Breast epithelium (tissue), 4 donors: ENCODE measurements at regions of chr6 and their contacts with region 1.

Region 1: GRCh38 chr6:42043787-42044475 is 6.4 kb upstream of the TAF8 start:
- DNase-seq: peak; percentile 80 to 89
- H3K4me3 ChIP-seq: peak overlapping the region in 2 of 3 donors; percentile 52 to 90
- H3K27ac ChIP-seq: peak overlapping the region; percentile 67 to 82
- H3K4me1 ChIP-seq: peaks cover 6 to 27% of the 10 kb centered on the region in 2 donors
- H3K27me3 ChIP-seq: no peaks in the 10 kb centered on the region
- CTCF ChIP-seq: peak; percentile 94 to 97 (median 97)
- POLR2A ChIP-seq: no peak

Region 2: DNA sequence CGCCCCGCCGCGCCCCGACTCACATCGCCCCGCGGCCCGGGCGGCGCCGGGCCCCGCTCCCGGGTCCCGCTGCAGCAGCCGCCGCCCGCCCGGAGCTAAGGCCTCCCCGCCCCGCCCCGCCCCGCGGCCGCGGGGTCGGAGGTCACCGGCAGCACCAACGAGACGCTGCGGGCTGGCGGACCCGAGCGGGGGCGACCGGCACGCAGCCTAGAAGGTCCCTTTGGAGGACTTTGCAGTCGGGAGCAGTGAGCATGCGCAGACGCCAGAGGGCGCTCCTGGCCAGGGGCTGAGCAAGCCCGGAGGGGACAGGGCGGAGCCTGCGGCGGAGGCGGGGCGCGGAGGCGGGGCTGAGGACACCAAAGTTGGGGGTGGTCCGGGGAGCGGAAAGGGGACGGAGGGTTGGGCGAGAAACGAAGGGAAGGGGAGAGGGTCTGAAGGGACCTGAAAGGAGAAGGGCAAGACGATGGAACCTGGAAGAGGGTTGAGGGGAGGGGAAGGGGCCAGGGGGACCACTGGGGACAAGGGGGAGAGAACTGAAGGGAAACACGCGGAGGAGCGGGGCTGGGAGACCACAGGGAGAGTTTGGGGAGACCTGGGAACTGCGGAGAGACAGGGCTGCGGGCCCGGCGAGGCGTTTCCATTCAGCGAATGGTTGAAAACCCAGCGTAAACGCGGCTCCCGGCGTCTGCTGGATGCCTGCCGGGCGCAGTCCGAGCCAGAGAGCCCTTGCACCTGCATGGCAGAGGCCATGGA is 264.0 kb before region 1 on chr6 and contains the start of gene FRS3:
- intact Hi-C with region 1: loop called (anchors 5 kb)
- DNase-seq: peak; percentile 92 to 97
- H3K4me3 ChIP-seq: peak within 1 kb of the TSS; percentile 77 to 81 (median 77)
- H3K27ac ChIP-seq: peak within 1 kb of the TSS; percentile 71 to 82
- H3K4me1 ChIP-seq: peaks cover 5% of the 10 kb centered on the region in 2 donors
- H3K27me3 ChIP-seq: no peaks in the 10 kb centered on the region
- CTCF ChIP-seq: peak; percentile 53 to 89 (median 77)
- POLR2A ChIP-seq: no peak
- total RNA-seq, gene FRS3: 3.5 to 4.3 (median 3.8) TPM

Region 3: DNA sequence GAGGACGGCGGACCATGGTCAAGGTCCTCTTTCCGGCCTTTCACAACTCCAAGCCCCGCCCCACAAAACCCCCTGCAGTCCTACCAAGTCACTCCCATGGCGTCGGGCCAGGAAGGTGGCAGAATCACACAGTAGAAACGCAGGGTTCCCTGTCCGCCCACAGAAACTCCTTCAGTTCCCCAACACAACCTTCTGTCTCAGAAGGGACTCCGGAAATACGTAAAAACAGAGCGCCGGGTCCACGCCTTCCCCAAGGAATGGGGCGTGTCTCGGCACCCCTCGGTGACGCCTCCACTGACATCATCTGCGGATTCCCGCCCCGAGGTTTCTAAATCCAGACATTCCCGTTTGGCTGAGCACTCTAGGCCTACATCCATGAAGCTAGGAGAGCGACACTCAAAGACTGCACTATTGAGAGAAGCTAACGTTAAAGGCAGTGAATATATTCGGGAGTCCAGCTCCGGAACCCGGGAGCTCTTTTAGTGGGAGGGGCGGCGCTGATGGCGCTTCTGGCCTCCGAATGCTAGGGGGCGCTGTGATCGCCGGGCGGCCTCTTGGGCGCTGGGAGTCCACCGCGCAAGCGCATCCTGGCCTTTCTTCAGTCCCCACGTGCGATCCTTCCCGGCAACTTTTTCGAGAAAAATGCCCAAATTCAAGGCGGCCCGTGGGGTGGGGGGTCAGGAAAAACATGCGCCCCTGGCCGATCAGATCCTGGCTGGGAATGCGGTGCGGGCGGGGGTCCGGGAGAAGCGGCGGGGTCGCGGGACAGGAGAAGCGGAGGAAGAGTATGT is 122.8 kb before region 1 on chr6 and contains the starts of genes BYSL and MED20:
- intact Hi-C with region 1: loop called (anchors 10 kb)
- DNase-seq: peak; percentile 91 to 93
- H3K4me3 ChIP-seq: peak within 1 kb of the TSS; percentile 75 to 88 (median 86)
- H3K27ac ChIP-seq: peak within 1 kb of the TSS; percentile 95 to 99
- H3K4me1 ChIP-seq: peaks cover 6 to 11% of the 10 kb centered on the region in 2 donors
- H3K27me3 ChIP-seq: no peaks in the 10 kb centered on the region
- CTCF ChIP-seq: peak; percentile 95 to 98 (median 97)
- POLR2A ChIP-seq: peak; percentile 53
- total RNA-seq, gene BYSL: 7.7 to 8.8 (median 8.6) TPM
- total RNA-seq, gene MED20: 9.8 to 16.5 (median 9.8) TPM

Region 4: DNA sequence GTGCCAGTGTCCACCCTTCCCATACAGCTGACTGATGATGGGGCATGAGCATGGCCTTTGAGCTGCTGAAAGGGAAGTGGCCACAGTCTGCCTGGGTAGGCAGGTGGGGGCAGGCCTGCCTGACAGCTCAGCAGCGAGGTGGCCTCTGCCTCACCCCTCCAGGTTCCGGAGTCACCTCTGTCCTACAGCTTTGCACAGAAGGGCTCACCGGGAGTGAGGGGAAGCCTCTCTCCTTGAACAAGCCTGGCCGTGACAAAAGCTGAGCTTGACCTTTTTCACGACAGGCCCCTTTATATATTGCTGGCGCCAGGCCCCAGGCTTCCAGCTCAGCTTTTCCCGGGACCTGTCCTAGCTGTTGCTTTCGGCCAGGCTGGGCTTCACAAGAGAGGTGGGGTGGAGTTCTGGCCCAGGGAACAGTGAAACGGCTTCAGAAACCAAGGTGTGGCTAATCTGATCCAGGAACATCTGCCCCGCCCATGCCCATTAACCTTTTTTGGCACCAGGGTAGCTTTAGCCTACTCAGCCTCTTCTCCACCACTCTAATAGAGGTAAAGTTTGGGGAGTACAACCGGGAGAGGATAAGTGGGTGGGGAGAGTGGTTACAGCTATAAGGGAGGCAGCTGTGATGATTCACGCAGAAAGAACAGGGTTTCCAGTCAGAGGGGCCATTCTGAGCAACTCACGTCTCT is 55.6 kb after region 1 on chr6:
- intact Hi-C with region 1: no loop called
- DNase-seq: peak; percentile 71 to 72
- H3K4me3 ChIP-seq: no peak overlapping the region
- H3K27ac ChIP-seq: peak overlapping the region; percentile 77 to 91
- H3K4me1 ChIP-seq: peaks cover 0 to 12% of the 10 kb centered on the region in 2 donors
- H3K27me3 ChIP-seq: no peaks in the 10 kb centered on the region
- CTCF ChIP-seq: no peak
- POLR2A ChIP-seq: no peak